ENCODE measurements at regions of chr5 and their contacts with region 1.

Region 1: DNA sequence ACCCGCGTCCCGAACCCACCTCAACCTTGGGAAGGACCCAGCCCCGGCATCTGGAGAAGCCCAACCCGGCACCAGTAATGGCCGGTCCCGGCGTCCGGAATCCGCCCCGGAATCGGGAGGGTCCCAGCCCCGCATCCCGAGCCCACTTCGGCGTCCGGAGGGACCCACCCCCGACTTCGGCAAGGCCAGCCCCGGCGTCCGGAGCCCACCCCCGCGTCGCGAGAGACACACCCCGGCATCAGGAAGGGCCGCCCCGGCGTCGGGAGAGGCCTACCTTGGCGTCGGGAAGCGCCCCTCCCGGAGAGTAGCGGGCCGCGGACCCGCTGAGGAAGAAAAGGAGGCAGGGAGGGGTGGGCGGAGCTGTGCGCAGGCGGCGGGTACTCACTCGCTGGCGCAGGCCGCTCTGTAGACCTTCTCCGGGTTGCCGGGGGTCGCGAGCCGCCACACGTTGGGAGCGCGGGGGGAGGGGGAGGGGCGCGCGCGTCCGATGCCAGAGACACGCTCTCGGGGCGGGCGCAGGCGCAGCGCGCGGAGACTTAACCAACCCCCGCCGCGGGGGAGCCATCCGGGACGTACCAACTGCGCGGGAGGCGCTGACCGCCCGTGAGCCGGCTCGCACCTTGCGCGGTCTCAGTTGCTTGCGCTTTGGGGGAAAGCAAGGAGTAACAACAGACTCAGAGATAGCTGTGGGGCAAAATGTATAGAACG is at the start of gene UIMC1:
- H3K4me3 ChIP-seq: peak within 1 kb of the TSS; percentile 66
- H3K27ac ChIP-seq: peak within 1 kb of the TSS; percentile 83
- H3K4me1 ChIP-seq: peaks cover 14% of the 10 kb centered on the region
- CTCF ChIP-seq: peak; percentile 55; the same call in 1 of the 2 replicates

Region 2: GRCh38 chr5:177022384-177023308 is 16.2 kb after region 1 on chr5 and contains the start of gene ZNF346:
- CTCF ChIA-PET with region 1: no interaction called
- POLR2A ChIA-PET with region 1: interaction called, 14 read pairs
- H3K4me3 ChIP-seq: peak within 1 kb of the TSS; percentile 84
- H3K27ac ChIP-seq: peak within 1 kb of the TSS; percentile 96
- H3K4me1 ChIP-seq: no peaks in the 10 kb centered on the region
- CTCF ChIP-seq: peak; percentile 90